ENCODE measurements at regions of chr11 and their contacts with region 1.

Region 1: GRCh38 chr11:45872513-45873356 is 12.7 kb upstream of the MAPK8IP1 start:
- DNase-seq: peak; percentile 100
- H3K4me3 ChIP-seq: no peak overlapping the region
- H3K27ac ChIP-seq: peak overlapping the region; percentile 61
- H3K4me1 ChIP-seq: peaks cover 21% of the 10 kb centered on the region
- H3K27me3 ChIP-seq: no peaks in the 10 kb centered on the region
- CTCF ChIP-seq: peak; percentile 100

Region 2: GRCh38 chr11:45846974-45847910 is 25.5 kb before region 1 on chr11 and contains the start of gene CRY2:
- CTCF ChIA-PET with region 1: interaction called, 10 read pairs
- POLR2A ChIA-PET with region 1: no interaction called
- intact Hi-C with region 1: no loop called
- DNase-seq: peak; percentile 100
- H3K4me3 ChIP-seq: peak within 1 kb of the TSS; percentile 74
- H3K27ac ChIP-seq: peak within 1 kb of the TSS; percentile 87
- H3K4me1 ChIP-seq: peaks cover 25% of the 10 kb centered on the region
- H3K27me3 ChIP-seq: peaks cover 12% of the 10 kb centered on the region
- CTCF ChIP-seq: no peak
- total RNA-seq, gene CRY2: 46.4 and 47.0 TPM in 2 replicates

Region 3: DNA sequence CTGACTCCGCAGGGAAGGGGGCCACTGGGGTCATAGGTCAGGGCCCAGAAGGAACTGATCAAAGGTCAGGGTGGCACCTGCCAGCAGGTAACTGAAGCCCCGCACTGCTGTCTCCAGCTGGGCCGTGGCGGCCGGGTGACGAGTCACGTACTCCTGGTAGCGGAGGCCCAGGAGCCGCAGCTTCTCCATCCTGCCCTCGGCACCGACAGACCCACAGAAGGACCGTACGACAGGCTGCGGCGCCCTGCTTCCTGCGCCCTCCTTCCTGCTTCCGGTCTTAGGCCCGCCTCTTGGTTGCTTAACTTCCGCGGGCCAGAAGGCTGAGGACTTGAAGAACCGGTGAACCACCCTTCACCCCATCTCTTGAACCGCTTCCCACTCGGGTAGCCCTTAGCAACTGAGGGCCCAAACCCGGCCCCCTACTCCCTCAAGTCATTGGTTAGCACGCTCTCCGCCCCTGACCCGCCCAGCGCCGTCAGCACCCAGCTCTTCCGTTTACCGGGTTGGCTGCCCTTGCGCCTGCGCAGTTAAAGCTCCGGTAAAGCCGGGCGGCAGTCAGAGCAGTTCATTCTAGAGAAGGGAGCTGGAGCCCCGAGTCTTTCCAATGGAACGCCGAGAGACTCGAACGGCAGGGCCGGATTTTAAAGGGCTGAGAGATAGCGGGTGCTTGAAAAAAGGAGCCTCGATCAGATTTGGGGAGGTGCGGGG is 45.0 kb after region 1 on chr11 and contains the start of gene PEX16:
- CTCF ChIA-PET with region 1: interaction called, 4 read pairs
- POLR2A ChIA-PET with region 1: no interaction called
- intact Hi-C with region 1: loop called (anchors 2 kb)
- DNase-seq: peak; percentile 100
- H3K4me3 ChIP-seq: peak within 1 kb of the TSS; percentile 71
- H3K27ac ChIP-seq: peak within 1 kb of the TSS; percentile 87
- H3K4me1 ChIP-seq: peaks cover 9% of the 10 kb centered on the region
- H3K27me3 ChIP-seq: no peaks in the 10 kb centered on the region
- CTCF ChIP-seq: no peak
- total RNA-seq, gene PEX16: 64.1 and 68.9 TPM in 2 replicates

Region 4: GRCh38 chr11:46006418-46007070 is 133.8 kb after region 1 on chr11:
- CTCF ChIA-PET with region 1: interaction called, 39 read pairs
- POLR2A ChIA-PET with region 1: no interaction called
- intact Hi-C with region 1: loop called (anchors 5 kb)
- DNase-seq: peak; percentile 95
- H3K4me3 ChIP-seq: no peak overlapping the region
- H3K27ac ChIP-seq: no peak overlapping the region
- H3K4me1 ChIP-seq: peaks cover 28% of the 10 kb centered on the region
- H3K27me3 ChIP-seq: no peaks in the 10 kb centered on the region
- CTCF ChIP-seq: peak; percentile 100